ENCODE measurements at regions of chr14 and their contacts with region 1.

Region 1: DNA sequence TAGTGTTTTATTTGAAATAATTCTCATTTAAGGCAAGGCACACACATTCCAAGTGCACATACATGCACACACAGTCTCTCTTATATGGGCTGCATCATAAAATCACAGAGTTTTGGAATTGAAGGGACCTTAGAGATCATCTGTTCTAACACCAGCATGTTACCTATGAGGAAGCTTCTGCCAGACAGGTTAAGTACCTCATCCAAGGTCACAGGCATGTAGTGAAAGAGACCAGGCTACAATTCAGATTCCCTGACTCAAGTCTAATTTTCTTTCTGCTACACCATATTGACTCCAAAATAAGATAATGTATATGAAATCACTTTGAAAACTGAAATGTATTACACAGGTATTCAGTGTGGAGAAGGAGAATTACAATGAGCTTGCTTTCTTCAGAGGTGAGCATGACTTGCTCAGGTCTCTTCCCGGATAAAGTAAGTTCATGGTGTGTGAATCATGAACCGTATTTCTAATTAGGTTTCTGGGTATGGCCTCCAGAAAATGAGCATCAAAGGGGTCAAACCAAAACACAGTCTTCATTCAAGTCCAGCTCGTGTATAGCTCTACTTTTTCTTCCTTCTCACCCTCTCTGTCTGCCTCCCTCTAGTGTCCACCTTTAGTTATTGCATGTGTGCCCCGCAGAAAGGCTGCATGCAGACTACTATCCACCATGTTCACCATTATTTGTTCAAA is 411.9 kb downstream of the FUT8 start:
- DNase-seq: peak; percentile 70
- H3K4me3 ChIP-seq: peak overlapping the region in 1 of 2 experiments; percentile 36; a peak in 1 of 4 replicates
- H3K27ac ChIP-seq: no peak overlapping the region
- H3K4me1 ChIP-seq: no peaks in the 10 kb centered on the region
- H3K27me3 ChIP-seq: peaks cover 5% of the 10 kb centered on the region; the same call in 1 of the 2 replicates
- CTCF ChIP-seq: peak; percentile 90
- EP300 ChIP-seq: no peak
- RAD21 ChIP-seq: peak; percentile 86

Region 2: DNA sequence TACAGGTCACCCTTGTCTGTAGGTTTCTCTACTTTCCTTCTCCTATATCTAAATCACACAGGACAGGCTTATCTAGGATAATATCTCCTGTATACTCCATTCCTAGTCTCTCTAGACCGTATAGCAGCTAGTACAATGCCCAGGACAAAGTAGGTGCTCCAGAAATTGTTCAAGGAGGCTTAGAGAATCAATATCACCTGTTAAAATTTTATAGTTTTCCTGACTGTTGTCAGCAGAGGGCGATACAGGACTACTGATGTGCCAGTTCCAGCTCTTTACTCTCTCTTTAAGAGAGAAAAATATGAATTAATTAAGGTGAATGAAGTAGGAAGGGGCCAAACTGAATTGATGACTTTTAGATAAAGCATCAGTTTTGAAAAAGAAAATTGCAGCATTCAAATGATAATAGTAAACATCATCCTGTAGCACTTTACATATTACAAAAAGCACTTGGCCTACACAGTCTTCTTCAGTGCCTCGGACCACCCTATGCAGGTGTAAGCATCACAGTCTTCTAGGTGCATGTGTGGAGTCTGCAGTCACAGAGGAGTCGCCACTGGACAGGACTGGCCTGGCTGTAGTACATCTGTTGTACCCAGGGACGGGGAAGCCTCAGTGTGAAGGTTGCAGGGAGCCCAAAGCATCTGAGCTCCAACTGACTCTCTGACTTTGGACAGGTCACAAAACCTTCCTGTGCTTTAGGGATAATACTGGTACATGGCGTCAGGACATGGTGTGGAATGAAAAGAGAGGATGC is 660.2 kb before region 1 on chr14:
- CTCF ChIA-PET with region 1: interaction called, 44 read pairs
- POLR2A ChIA-PET with region 1: interaction called, 3 read pairs
- DNase-seq: peak; percentile 63
- H3K4me3 ChIP-seq: peak overlapping the region in 1 of 2 experiments; percentile 25; a peak in 1 of 4 replicates
- H3K27ac ChIP-seq: no peak overlapping the region
- H3K4me1 ChIP-seq: no peaks in the 10 kb centered on the region
- H3K27me3 ChIP-seq: no peaks in the 10 kb centered on the region
- CTCF ChIP-seq: peak; percentile 88
- EP300 ChIP-seq: no peak
- RAD21 ChIP-seq: peak; percentile 93

Region 3: GRCh38 chr14:65421201-65421981 is 403.0 kb before region 1 on chr14:
- CTCF ChIA-PET with region 1: interaction called, 174 read pairs
- POLR2A ChIA-PET with region 1: no interaction called
- DNase-seq: no peak
- H3K4me3 ChIP-seq: 0 out of 4 replicates have a peak overlapping the region, but pooled peaks of 1 of the 2 experiments have one; percentile 22
- H3K27ac ChIP-seq: peak overlapping the region in 1 of 2 experiments; percentile 90; a peak in 2 of 4 replicates
- H3K4me1 ChIP-seq: peaks cover 0 to 11% of the 10 kb centered on the region in 2 experiments; a peak in 3 of 4 replicates
- H3K27me3 ChIP-seq: no peaks in the 10 kb centered on the region
- CTCF ChIP-seq: no peak
- EP300 ChIP-seq: peak in 1 of 2 experiments; percentile 74; a peak in 2 of 4 replicates
- RAD21 ChIP-seq: no peak

Region 4: DNA sequence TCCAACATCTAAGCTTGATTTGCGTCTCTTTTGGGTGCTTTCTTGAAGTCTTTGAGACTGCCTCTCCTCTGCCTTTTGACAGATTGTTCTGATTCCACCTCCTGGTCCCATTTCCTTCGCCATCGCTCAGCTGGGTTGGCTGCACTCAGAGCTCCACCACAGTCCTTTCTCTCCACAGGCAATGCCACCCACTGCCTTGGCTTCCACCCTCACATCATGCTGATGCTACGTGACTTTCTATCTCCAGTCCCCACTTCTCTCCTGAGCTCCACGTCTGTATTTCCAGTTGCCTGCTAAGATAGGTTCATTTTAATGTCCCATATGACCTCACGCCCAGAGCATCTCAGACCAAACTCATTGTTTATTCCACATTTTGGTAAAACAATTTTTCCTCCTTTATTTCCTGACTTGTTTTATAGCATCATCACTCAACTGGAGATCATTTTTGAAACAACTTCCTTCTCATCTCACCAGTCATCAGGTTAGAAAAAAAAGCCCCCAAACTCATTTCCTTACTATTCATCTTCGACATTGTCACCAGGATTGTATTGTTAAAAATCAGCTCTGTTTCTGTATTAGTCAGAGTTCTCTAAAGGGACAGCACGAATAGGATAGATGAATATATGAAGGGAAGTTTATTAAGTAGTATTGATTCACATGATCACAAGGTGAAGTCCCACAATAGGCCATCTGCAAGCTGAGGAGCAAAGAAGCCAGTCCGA is 19.5 kb before region 1 on chr14:
- CTCF ChIA-PET with region 1: interaction called, 30 read pairs
- POLR2A ChIA-PET with region 1: no interaction called
- DNase-seq: no peak
- H3K4me3 ChIP-seq: no peak overlapping the region
- H3K27ac ChIP-seq: no peak overlapping the region
- H3K4me1 ChIP-seq: peaks cover 0 to 10% of the 10 kb centered on the region in 2 experiments; a peak in 1 of 4 replicates
- H3K27me3 ChIP-seq: no peaks in the 10 kb centered on the region
- CTCF ChIP-seq: no peak
- EP300 ChIP-seq: no peak
- RAD21 ChIP-seq: no peak

Region 5: GRCh38 chr14:65838565-65838964 is 14.1 kb after region 1 on chr14:
- CTCF ChIA-PET with region 1: interaction called, 20 read pairs
- POLR2A ChIA-PET with region 1: no interaction called
- DNase-seq: no peak
- H3K4me3 ChIP-seq: no peak overlapping the region
- H3K27ac ChIP-seq: no peak overlapping the region
- H3K4me1 ChIP-seq: no peaks in the 10 kb centered on the region; a peak in 1 of 4 replicates
- H3K27me3 ChIP-seq: no peaks in the 10 kb centered on the region; the same call in 1 of the 2 replicates
- CTCF ChIP-seq: no peak
- EP300 ChIP-seq: no peak
- RAD21 ChIP-seq: no peak

Region 6: GRCh38 chr14:65958664-65959562 is 134.5 kb after region 1 on chr14:
- CTCF ChIA-PET with region 1: interaction called, 13 read pairs
- POLR2A ChIA-PET with region 1: no interaction called
- DNase-seq: peak; percentile 49
- H3K4me3 ChIP-seq: no peak overlapping the region
- H3K27ac ChIP-seq: no peak overlapping the region
- H3K4me1 ChIP-seq: no peaks in the 10 kb centered on the region
- H3K27me3 ChIP-seq: no peaks in the 10 kb centered on the region
- CTCF ChIP-seq: peak; percentile 69
- EP300 ChIP-seq: no peak
- RAD21 ChIP-seq: peak; percentile 65

Region 7: GRCh38 chr14:66081594-66082376 is 257.4 kb after region 1 on chr14:
- CTCF ChIA-PET with region 1: no interaction called
- POLR2A ChIA-PET with region 1: no interaction called
- DNase-seq: peak; percentile 73
- H3K4me3 ChIP-seq: no peak overlapping the region
- H3K27ac ChIP-seq: peak overlapping the region in 1 of 2 experiments; percentile 63; a peak in 2 of 4 replicates
- H3K4me1 ChIP-seq: peaks cover 0 to 9% of the 10 kb centered on the region in 2 experiments; a peak in 1 of 4 replicates
- H3K27me3 ChIP-seq: no peaks in the 10 kb centered on the region
- CTCF ChIP-seq: no peak
- EP300 ChIP-seq: peak in 1 of 2 experiments; percentile 78; a peak in 1 of 4 replicates
- RAD21 ChIP-seq: no peak